ENCODE measurements at regions of chr1 and their contacts with region 1.

Region 1: GRCh38 chr1:167553136-167554027 is at the start of gene CREG1:
- DNase-seq: peak; percentile 98
- H3K4me3 Mint-ChIP-seq: peak within 1 kb of the TSS; percentile 87
- H3K27ac Mint-ChIP-seq: peak within 1 kb of the TSS; percentile 36
- H3K4me1 Mint-ChIP-seq: peaks cover 59% of the 10 kb centered on the region
- H3K27me3 Mint-ChIP-seq: no peaks in the 10 kb centered on the region
- CTCF ChIP-seq: no peak
- total RNA-seq, gene CREG1: 136 and 154 TPM in 2 replicates

Region 2: GRCh38 chr1:167273027-167273800 is 280.2 kb before region 1 on chr1:
- CTCF ChIA-PET with region 1: interaction called, 21 read pairs
- POLR2A ChIA-PET with region 1: no interaction called
- intact Hi-C with region 1: loop called (anchors 1 kb)
- DNase-seq: peak; percentile 86
- H3K4me3 Mint-ChIP-seq: no peak overlapping the region
- H3K27ac Mint-ChIP-seq: peak overlapping the region; percentile 23
- H3K4me1 Mint-ChIP-seq: peaks cover 42% of the 10 kb centered on the region
- H3K27me3 Mint-ChIP-seq: no peaks in the 10 kb centered on the region
- CTCF ChIP-seq: no peak

Region 3: GRCh38 chr1:167442124-167442848 is 111.1 kb before region 1 on chr1:
- CTCF ChIA-PET with region 1: interaction called, 13 read pairs
- POLR2A ChIA-PET with region 1: interaction called, 4 read pairs
- intact Hi-C with region 1: loop called (anchors 5 kb)
- DNase-seq: peak; percentile 94
- H3K4me3 Mint-ChIP-seq: no peak overlapping the region
- H3K27ac Mint-ChIP-seq: no peak overlapping the region
- H3K4me1 Mint-ChIP-seq: peaks cover 6% of the 10 kb centered on the region
- H3K27me3 Mint-ChIP-seq: peaks cover 18% of the 10 kb centered on the region
- CTCF ChIP-seq: peak; percentile 98

Region 4: DNA sequence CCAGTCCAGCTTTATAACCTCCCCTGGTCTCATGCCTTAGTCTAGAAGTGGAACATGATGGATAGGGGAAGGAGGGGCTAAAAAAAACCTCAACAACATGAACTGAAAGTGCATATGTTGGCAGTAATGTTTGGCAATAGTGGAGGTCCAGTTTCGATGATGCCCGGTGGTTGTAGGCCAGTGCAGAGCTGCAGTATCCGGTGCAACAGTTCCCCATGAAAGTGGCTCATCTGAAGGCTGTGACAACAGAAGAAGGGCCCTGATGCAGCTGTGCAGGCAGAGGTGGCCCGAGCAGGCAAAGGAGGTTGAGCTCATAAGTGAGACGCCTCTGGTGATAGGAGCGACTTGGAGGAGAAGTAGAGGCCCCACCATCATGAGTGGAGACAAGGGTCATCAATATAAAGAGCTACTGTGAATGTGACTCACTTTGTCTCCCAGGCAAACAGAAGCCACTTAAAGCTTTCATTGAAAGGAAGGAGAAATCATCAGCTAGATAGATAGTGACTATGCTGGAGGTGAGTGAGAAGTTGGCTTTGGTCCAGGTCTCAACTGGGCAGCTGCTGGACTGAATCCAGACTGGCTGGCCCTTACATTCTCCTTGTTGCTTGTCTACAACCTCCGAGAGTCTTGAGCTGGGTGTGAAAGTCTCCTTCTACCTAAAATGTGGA is 10.3 kb after region 1 on chr1:
- CTCF ChIA-PET with region 1: interaction called, 79 read pairs
- POLR2A ChIA-PET with region 1: interaction called, 152 read pairs
- intact Hi-C with region 1: no loop called
- DNase-seq: peak; percentile 79
- H3K4me3 Mint-ChIP-seq: peak overlapping the region; percentile 64
- H3K27ac Mint-ChIP-seq: peak overlapping the region; percentile 85
- H3K4me1 Mint-ChIP-seq: peaks cover 46% of the 10 kb centered on the region
- H3K27me3 Mint-ChIP-seq: no peaks in the 10 kb centered on the region
- CTCF ChIP-seq: no peak

Region 5: GRCh38 chr1:167648978-167649744 is 95.8 kb after region 1 on chr1:
- CTCF ChIA-PET with region 1: no interaction called
- POLR2A ChIA-PET with region 1: no interaction called
- intact Hi-C with region 1: no loop called
- DNase-seq: no peak
- H3K4me3 Mint-ChIP-seq: no peak overlapping the region
- H3K27ac Mint-ChIP-seq: no peak overlapping the region
- H3K4me1 Mint-ChIP-seq: no peaks in the 10 kb centered on the region
- H3K27me3 Mint-ChIP-seq: no peaks in the 10 kb centered on the region
- CTCF ChIP-seq: no peak

Region 6: GRCh38 chr1:167663002-167663772 is 109.8 kb after region 1 on chr1:
- CTCF ChIA-PET with region 1: interaction called, 6 read pairs
- POLR2A ChIA-PET with region 1: interaction called, 31 read pairs
- intact Hi-C with region 1: no loop called
- DNase-seq: peak; percentile 99
- H3K4me3 Mint-ChIP-seq: peak overlapping the region; percentile 51
- H3K27ac Mint-ChIP-seq: peak overlapping the region; percentile 71
- H3K4me1 Mint-ChIP-seq: peaks cover 71% of the 10 kb centered on the region
- H3K27me3 Mint-ChIP-seq: no peaks in the 10 kb centered on the region
- CTCF ChIP-seq: no peak

Region 7: GRCh38 chr1:167803358-167804207 is 250.2 kb after region 1 on chr1:
- CTCF ChIA-PET with region 1: interaction called, 4 read pairs
- POLR2A ChIA-PET with region 1: interaction called, 3 read pairs
- intact Hi-C with region 1: loop called (anchors 10 kb)
- DNase-seq: peak; percentile 95
- H3K4me3 Mint-ChIP-seq: peak overlapping the region; percentile 3
- H3K27ac Mint-ChIP-seq: no peak overlapping the region
- H3K4me1 Mint-ChIP-seq: peaks cover 43% of the 10 kb centered on the region
- H3K27me3 Mint-ChIP-seq: no peaks in the 10 kb centered on the region
- CTCF ChIP-seq: peak; percentile 97